ENCODE measurements at regions of chr5 and their contacts with region 1.

Region 1: GRCh38 chr5:91383027-91383955 is at the start of gene ARRDC3:
- DNase-seq: peak; percentile 97
- ATAC-seq: peak; percentile 74 to 88
- H3K4me3 ChIP-seq: peak within 1 kb of the TSS; percentile 62
- H3K27ac ChIP-seq: peak within 1 kb of the TSS; percentile 96
- H3K4me1 ChIP-seq: peaks cover 16% of the 10 kb centered on the region
- H3K27me3 ChIP-seq: no peaks in the 10 kb centered on the region
- CTCF ChIP-seq: no peak
- total RNA-seq, gene ARRDC3: 90.5 TPM

Region 2: GRCh38 chr5:90866333-90866732 is 517.0 kb before region 1 on chr5:
- intact Hi-C with region 1: loop called (anchors 10 kb)
- DNase-seq: no peak
- ATAC-seq: peak; percentile 43 to 86
- H3K4me3 ChIP-seq: no peak overlapping the region
- H3K27ac ChIP-seq: no peak overlapping the region
- H3K4me1 ChIP-seq: peaks cover 17% of the 10 kb centered on the region
- H3K27me3 ChIP-seq: no peaks in the 10 kb centered on the region
- CTCF ChIP-seq: peak; percentile 56

Region 3: GRCh38 chr5:90932052-90932699 is 451.1 kb before region 1 on chr5:
- intact Hi-C with region 1: loop called (anchors 10 kb)
- DNase-seq: no peak
- ATAC-seq: peak; percentile 75 to 91
- H3K4me3 ChIP-seq: no peak overlapping the region
- H3K27ac ChIP-seq: no peak overlapping the region
- H3K4me1 ChIP-seq: peaks cover 7% of the 10 kb centered on the region
- H3K27me3 ChIP-seq: no peaks in the 10 kb centered on the region
- CTCF ChIP-seq: peak; percentile 75

Region 4: DNA sequence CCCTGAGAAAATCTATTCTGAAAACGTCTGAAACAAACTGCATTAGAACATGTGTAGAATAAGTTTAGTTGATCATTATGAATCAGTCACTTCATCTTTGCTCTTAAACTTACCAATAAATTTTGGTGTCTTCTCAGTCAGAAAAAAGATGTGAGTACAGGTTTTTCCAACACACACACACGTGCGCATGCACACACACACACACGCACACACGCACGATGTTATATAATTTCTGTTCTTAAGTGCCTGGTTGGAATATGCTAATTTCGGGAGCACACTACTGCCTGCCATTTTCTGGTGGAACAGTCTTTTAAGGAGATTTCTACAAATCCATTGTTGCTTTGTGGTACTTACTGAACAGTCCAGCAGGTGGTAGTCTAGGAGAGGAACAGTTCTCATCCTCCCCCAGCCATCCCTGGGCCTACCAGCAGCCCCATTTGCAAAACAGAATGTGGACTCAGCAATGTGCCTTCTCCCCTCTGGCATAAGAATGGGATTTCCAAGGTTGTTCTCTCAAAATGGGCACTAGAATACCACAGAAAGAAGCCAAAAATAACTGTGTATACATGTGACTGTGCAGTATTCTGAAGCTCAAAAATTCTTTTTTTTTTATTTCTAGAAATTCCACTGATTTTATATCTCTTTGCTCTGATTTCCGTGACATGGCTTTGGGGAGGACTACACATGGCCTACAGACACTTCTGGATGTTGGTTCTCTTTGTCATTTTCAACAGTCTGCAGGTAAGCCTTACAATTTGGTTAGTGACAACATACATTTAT is 281.5 kb before region 1 on chr5:
- intact Hi-C with region 1: loop called (anchors 10 kb)
- DNase-seq: peak; percentile 68
- ATAC-seq: peak; percentile 97
- H3K4me3 ChIP-seq: no peak overlapping the region
- H3K27ac ChIP-seq: no peak overlapping the region
- H3K4me1 ChIP-seq: peaks cover 6% of the 10 kb centered on the region
- H3K27me3 ChIP-seq: no peaks in the 10 kb centered on the region
- CTCF ChIP-seq: peak; percentile 77

Region 5: GRCh38 chr5:91225848-91226686 is 157.2 kb before region 1 on chr5:
- intact Hi-C with region 1: loop called (anchors 10 kb)
- DNase-seq: peak; percentile 53
- ATAC-seq: peak; percentile 59 to 87
- H3K4me3 ChIP-seq: no peak overlapping the region
- H3K27ac ChIP-seq: no peak overlapping the region
- H3K4me1 ChIP-seq: no peaks in the 10 kb centered on the region
- H3K27me3 ChIP-seq: no peaks in the 10 kb centered on the region
- CTCF ChIP-seq: peak; percentile 51